Colonic mucosa (tissue), 4 donors: ENCODE measurements at regions of chr20 and their contacts with region 1.

Region 1: DNA sequence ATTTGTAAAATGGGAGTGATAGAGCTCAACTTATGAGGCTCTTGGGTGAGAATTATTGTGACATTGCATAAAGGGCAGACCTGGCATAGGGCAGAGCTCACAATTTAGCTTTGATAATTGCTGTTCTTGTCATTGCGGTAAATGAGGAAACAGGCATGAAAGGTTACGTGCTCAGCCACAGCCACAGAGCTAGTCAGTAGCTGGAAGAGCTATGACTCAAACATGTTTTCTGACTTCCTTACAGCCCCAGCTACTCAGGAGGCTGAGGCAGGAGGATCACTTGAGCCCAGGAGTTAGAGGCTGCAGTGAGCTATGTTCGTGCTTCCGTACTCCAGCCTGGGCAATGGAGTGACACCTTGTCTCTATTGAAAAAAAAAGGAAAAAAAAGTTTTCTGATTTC is 3.5 kb upstream of the GHRH start:
- DNase-seq: no peak
- H3K4me3 ChIP-seq: no peak overlapping the region
- H3K27ac ChIP-seq: no peak overlapping the region
- H3K4me1 ChIP-seq: no peaks in the 10 kb centered on the region
- H3K27me3 ChIP-seq: no peaks in the 10 kb centered on the region
- CTCF ChIP-seq: no peak

Region 2: DNA sequence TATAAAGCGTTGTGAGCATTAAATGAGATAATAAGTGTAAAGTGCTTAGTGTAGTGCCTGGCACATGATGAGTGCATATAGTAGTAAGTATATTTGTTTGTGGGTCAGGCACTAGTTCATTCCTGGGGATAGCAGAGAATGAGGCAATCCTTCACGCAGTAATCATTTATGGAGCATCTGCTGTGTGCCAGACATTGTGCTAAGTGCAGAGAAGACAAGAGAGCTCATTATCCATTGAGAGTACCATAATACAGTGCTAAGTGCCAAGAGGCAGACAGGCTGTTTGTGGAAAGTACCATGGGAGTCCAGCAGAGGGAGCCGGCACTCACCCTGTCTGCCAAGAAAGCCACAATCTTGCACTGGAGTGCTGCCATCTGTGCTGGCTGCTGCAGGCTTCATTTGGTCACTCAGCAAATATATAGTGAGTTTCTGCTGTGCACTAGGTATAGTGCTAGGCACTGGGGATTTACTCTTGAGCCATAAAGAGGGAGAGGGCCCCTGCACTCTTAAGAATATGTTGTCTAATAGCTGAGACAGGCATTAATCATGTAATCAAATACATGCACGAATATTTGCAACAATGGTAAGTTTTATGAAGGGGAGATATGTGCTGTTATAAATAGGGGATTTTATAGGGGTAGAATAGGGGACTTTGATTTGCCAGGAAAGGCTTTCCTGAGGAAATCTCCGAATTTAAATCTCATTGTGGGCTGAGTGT is 72.9 kb before region 1 on chr20:
- intact Hi-C with region 1: loop called (anchors 10 kb)
- DNase-seq: peak; percentile 89
- H3K4me3 ChIP-seq: no peak overlapping the region
- H3K27ac ChIP-seq: no peak overlapping the region
- H3K4me1 ChIP-seq: peaks cover 7% of the 10 kb centered on the region
- H3K27me3 ChIP-seq: no peaks in the 10 kb centered on the region
- CTCF ChIP-seq: peak; percentile 93